Activated T-helper 1 cell treated with anti-CD3 and anti-CD28 coated beads, Interleukin-12 subunit alpha, Interleukin-12 subunit beta, Interleukin-2, Interleukin-4 antibody, amounts not matched to agents 30 ng/mL and 10 ng/mL and 1 ng/mL, durations not matched to agents 14 hours and 24 hours and 36 hours (primary cell): ENCODE measurements at regions of chr7 and their contacts with region 1.

Region 1: GRCh38 chr7:44885394-44886317 is at the start of gene PURB:
- DNase-seq: peak; percentile 97
- H3K4me3 Mint-ChIP-seq: peak within 1 kb of the TSS; percentile 98
- H3K27ac Mint-ChIP-seq: peak within 1 kb of the TSS; percentile 100
- H3K4me1 Mint-ChIP-seq: peaks cover 67% of the 10 kb centered on the region
- H3K27me3 Mint-ChIP-seq: no peaks in the 10 kb centered on the region
- total RNA-seq, gene PURB: 42.1 and 42.6 TPM in 2 replicates

Region 2: DNA sequence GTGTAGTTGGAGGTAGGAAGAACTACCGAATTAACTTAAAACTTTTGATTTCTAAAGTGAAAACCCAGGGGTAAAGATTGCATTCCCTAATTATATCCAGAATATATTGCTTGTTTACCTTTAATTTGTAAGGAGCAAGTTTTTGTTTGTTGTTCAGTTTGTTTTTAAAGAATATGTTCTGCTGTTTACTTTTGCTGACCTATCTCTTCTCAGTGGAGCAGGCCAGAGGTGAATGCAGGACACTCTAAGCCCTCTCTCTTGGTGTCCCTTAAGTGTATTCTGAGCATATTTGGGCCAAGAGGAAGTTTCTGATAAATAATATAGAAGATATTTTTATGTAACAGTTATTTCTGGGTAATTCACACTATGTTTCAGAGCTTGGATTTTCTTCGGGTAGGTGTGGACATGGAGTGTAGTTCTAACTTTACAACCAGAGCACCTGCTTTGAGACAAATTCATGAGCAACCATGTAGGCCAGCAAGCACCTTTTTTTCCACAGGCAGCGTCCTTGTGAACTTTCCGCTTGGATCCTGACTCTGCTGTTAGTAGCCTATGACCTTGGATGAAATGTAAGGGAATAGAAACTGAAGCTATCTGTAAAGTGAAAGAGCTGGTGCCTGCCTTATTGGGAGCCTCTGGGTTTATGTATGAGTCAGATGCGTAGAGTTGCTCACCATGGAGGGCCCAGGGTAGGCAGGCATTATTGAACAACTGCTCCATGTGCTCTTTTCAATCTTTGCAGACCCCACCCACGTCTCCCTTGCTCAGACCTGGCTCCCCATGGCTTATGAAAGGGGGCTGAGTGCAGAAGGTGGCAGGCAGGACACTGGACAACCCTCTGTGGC is 263.1 kb before region 1 on chr7:
- intact Hi-C with region 1: no loop called
- DNase-seq: peak; percentile 40
- H3K4me3 Mint-ChIP-seq: peak overlapping the region; percentile 60
- H3K27ac Mint-ChIP-seq: peak overlapping the region; percentile 94
- H3K4me1 Mint-ChIP-seq: peaks cover 83% of the 10 kb centered on the region
- H3K27me3 Mint-ChIP-seq: no peaks in the 10 kb centered on the region

Region 3: GRCh38 chr7:44748045-44748947 is 137.4 kb before region 1 on chr7 and contains the start of gene ZMIZ2:
- intact Hi-C with region 1: loop called (anchors 1 kb)
- DNase-seq: peak; percentile 88
- H3K4me3 Mint-ChIP-seq: peak within 1 kb of the TSS; percentile 92
- H3K27ac Mint-ChIP-seq: peak within 1 kb of the TSS; percentile 95
- H3K4me1 Mint-ChIP-seq: peaks cover 45% of the 10 kb centered on the region
- H3K27me3 Mint-ChIP-seq: no peaks in the 10 kb centered on the region
- total RNA-seq, gene ZMIZ2: 123 and 129 TPM in 2 replicates

Region 4: DNA sequence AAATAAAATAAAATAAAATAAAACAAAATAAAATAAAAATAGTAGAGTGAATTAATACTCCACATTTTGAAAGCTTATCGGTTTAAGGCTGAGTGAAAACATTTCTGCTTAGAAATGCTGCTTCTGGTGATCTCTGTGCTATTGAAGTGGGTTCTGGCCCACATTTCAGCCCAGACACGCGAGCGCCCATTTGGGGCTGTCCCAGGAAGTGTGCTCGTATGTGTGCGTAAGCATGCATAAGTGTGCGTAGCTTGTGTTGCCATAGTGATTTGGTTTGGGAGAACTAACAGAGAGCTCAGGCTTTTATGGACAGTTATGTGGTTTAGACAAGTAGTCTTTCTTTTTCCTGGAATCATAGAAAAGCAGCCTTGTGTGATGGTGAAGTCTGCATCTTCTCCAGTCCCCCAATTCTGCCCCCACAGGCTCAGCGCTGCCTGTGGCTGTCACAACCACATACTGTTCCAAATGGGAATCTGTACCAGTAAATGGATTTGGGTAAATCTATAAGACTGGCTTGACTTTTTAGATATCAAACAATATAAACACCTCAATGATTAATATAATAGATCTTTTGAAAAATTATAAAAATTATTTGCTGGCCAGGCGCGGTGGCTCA is 29.4 kb after region 1 on chr7:
- intact Hi-C with region 1: loop called (anchors 1 kb)
- DNase-seq: peak; percentile 78
- H3K4me3 Mint-ChIP-seq: peak overlapping the region; percentile 67
- H3K27ac Mint-ChIP-seq: peak overlapping the region; percentile 85
- H3K4me1 Mint-ChIP-seq: peaks cover 16% of the 10 kb centered on the region
- H3K27me3 Mint-ChIP-seq: peaks cover 2% of the 10 kb centered on the region

Region 5: GRCh38 chr7:44986218-44987053 is 100.8 kb after region 1 on chr7:
- intact Hi-C with region 1: loop called (anchors 1 kb)
- DNase-seq: peak; percentile 96
- H3K4me3 Mint-ChIP-seq: peak overlapping the region; percentile 98
- H3K27ac Mint-ChIP-seq: peak overlapping the region; percentile 99
- H3K4me1 Mint-ChIP-seq: peaks cover 64% of the 10 kb centered on the region
- H3K27me3 Mint-ChIP-seq: no peaks in the 10 kb centered on the region

Region 6: GRCh38 chr7:45136106-45137060 is 250.7 kb after region 1 on chr7:
- intact Hi-C with region 1: loop called (anchors 1 kb)
- DNase-seq: peak; percentile 55
- H3K4me3 Mint-ChIP-seq: no peak overlapping the region
- H3K27ac Mint-ChIP-seq: no peak overlapping the region
- H3K4me1 Mint-ChIP-seq: peaks cover 19% of the 10 kb centered on the region
- H3K27me3 Mint-ChIP-seq: peaks cover 10% of the 10 kb centered on the region